CD14-positive monocyte (primary cell): ENCODE measurements at regions of chr2 and their contacts with region 1.

Region 1: GRCh38 chr2:186589612-186590349 is at the start of gene ITGAV:
- DNase-seq: peak; percentile 86 to 90 (median 89)
- H3K4me3 ChIP-seq: peak within 1 kb of the TSS; percentile 82 to 97 (median 92)
- H3K4me3 Mint-ChIP-seq: peak within 1 kb of the TSS; percentile 90 to 94
- H3K27ac ChIP-seq: peak within 1 kb of the TSS; percentile 80 to 90
- H3K27ac Mint-ChIP-seq: peak within 1 kb of the TSS; percentile 78 to 91 (median 84)
- H3K4me1 ChIP-seq: peaks cover 18 to 27% of the 10 kb centered on the region in 2 donors
- H3K4me1 Mint-ChIP-seq: peaks cover 24% of the 10 kb centered on the region
- H3K27me3 ChIP-seq: no peaks in the 10 kb centered on the region
- H3K27me3 Mint-ChIP-seq: peaks cover 2 to 7% (median 6%) of the 10 kb centered on the region in 3 donors
- CTCF ChIP-seq: no peak
- polyA plus RNA-seq, gene ITGAV: 4.9 to 8.2 (median 6.0) TPM

Region 2: GRCh38 chr2:186485871-186486650 is 103.7 kb before region 1 on chr2 and contains the start of gene ZC3H15:
- intact Hi-C with region 1: loop called in 1 of 2 experiments (anchors 10 kb)
- DNase-seq: peak; percentile 99 to 100 (median 99)
- H3K4me3 ChIP-seq: peak within 1 kb of the TSS; percentile 75 to 97 (median 87)
- H3K4me3 Mint-ChIP-seq: peak within 1 kb of the TSS; percentile 97 to 99
- H3K27ac ChIP-seq: peak within 1 kb of the TSS; percentile 97
- H3K27ac Mint-ChIP-seq: peak within 1 kb of the TSS; percentile 98 to 99 (median 99)
- H3K4me1 ChIP-seq: peaks cover 27 to 32% of the 10 kb centered on the region in 2 donors
- H3K4me1 Mint-ChIP-seq: peaks cover 41% of the 10 kb centered on the region
- H3K27me3 ChIP-seq: no peaks in the 10 kb centered on the region
- H3K27me3 Mint-ChIP-seq: no peaks in the 10 kb centered on the region
- CTCF ChIP-seq: no peak
- polyA plus RNA-seq, gene ZC3H15: 39.4 to 52.8 (median 40.6) TPM